Left ventricle myocardium superior (tissue), 1 donor: ENCODE measurements at regions of chrX and their contacts with region 1.

Region 1: GRCh38 chrX:136880452-136881013 is at the start of gene RBMX:
- DNase-seq: peak; percentile 83
- ATAC-seq: peak; percentile 98
- total RNA-seq, gene RBMX: 93.6 TPM

Region 2: DNA sequence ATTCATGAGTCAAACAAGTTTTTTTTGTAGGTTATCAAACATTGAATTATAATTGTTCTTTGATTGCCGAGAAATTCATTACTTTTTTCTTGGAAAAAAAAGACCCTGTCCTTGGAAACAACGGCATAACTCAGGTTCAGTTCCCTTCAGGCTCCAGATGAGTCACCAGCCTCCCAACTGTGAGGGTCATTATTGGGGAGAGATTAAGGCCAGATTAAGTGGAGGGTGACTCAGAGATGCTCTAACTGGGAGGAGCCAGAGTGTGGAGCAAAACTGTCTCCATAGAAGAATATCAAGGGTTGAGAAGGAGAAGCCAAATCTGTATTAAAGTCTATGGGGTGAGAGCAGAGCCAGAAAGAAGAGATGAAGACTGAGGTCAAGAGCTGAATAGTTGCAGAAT is 570.1 kb before region 1 on chrX:
- intact Hi-C with region 1: no loop called
- DNase-seq: no peak
- ATAC-seq: no peak

Region 3: DNA sequence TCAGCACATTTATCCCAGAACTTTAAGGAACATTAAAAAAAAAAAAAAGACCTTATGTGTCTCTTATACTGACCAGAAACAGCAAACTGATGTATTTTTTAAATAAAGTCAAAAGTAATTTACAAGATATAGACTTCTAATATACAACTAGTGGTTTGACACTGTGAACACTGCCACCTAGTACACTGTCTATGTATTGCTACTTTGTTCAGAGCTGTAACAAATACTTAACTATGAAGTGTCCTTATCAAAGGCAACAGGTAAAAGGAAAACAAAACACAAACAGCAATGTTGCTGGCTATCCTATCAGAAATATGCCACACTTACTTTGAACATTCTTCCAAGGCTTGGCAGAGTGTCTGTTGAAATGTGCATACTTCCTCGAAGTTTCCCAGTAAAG is 172.2 kb before region 1 on chrX:
- intact Hi-C with region 1: loop called (anchors 5 kb)
- DNase-seq: no peak
- ATAC-seq: peak; percentile 34

Region 4: GRCh38 chrX:137033774-137034507 is 153.4 kb after region 1 on chrX and contains the start of gene GPR101:
- intact Hi-C with region 1: no loop called
- DNase-seq: no peak
- ATAC-seq: no peak
- total RNA-seq, gene GPR101: not detected

Region 5: DNA sequence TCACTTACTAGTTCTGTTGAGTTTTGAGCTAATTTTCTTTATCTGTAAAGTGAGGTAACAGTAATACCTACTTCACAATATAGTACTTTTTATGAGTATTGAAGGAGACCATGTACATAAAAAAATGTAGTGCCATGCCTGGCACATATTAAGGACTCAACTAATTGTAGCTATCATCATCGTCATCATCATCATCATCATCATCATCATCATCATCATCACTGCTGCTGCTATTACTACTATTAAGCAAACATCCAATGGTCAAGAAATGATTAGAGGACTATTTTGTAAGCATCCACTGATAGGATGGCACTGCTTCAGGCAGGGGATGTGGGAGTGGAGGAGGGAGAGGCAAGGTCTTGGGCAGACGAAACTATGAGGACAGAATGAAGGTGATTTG is 200.7 kb after region 1 on chrX:
- intact Hi-C with region 1: no loop called
- DNase-seq: no peak
- ATAC-seq: no peak

Region 6: DNA sequence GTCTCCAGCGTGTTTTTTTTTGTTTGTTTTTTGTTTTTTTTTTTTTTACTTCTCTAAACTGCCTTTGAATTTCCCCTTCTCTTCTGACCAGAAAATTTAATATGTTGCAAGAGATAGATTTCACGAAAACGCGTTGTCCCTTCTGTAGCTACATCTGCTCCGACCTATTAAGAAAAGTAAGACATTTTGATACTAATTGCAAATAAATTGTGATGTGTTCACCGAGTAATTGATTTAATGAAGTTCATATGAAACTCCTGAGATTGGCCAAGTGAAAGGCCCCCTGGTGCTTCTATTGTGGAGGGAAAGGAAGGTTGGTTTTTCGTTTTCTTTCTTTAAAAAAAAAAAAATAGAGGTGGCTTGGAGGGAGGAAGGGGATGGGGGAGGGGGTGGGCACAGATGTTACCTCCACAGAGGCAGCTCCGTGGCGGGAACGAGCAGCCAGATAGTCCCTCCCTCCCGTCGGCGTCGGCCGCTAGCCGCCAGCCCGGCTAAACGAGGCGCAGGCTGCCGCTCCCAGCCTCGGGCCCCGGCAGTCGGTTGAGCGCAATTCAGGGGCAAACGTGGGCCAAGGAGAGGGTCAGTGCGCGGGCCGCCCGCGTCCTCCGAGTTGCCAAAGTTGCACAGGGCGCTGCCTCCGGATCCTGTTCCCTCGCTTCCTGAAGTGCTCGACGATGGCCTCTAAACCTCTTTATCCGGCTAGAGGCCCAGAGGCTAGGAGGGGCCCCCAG is 546.3 kb after region 1 on chrX:
- intact Hi-C with region 1: no loop called
- DNase-seq: no peak
- ATAC-seq: no peak